ENCODE measurements at regions of chr2 and their contacts with region 1.

Region 1: DNA sequence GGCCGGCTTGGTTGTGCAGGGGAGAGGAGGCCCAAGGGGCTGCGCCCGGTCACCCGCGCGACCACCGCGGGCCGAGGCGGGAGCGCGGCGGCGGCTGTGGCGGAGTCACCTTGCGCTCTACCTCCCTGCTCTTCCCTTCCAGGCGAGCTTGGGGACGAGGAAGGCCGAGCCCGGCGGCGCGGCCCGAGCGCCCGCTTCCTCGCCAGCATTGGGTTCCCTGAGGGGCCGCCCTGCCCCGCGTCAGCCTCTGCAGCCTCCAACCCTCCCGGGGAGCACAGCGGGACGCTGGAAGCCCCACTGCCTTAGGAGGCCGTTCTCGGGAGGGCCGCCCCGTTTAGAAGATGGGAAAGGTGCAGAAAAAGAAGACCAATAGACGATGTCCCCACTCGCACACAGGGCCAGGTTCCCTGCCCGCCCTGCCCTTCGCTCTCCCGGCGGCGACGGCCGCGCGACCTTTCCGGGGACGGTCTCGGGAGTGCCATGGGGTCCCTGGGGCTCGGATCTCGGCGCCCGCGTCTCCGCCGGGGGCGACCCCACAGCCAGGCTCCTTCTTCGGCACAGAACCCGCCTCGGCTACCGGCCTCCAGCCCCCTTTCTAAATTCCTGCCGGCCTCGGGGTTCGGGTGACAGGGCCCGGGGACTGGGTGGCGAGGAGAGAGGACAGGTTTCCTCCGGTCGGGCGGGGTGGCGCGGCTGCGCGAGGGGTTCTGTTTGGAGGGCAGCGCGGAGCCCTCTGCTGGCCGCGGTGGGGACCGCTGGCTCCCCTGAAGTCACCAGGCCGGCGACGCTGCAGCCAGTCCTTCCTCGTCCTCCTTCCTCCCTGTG is 85.5 kb downstream of the HS6ST1 start:
- DNase-seq: peak; percentile 92
- H3K4me3 ChIP-seq: peak overlapping the region; percentile 45 to 82 (median 59)
- H3K27ac ChIP-seq: peak overlapping the region; percentile 76 to 84 (median 83)
- H3K4me1 ChIP-seq: peaks cover 0 to 25% (median 8%) of the 10 kb centered on the region in 4 donors
- H3K27me3 ChIP-seq: no peaks in the 10 kb centered on the region
- CTCF ChIP-seq: peak; percentile 87 to 92 (median 91)
- EP300 ChIP-seq: no peak
- POLR2A ChIP-seq: peak; percentile 54

Region 2: DNA sequence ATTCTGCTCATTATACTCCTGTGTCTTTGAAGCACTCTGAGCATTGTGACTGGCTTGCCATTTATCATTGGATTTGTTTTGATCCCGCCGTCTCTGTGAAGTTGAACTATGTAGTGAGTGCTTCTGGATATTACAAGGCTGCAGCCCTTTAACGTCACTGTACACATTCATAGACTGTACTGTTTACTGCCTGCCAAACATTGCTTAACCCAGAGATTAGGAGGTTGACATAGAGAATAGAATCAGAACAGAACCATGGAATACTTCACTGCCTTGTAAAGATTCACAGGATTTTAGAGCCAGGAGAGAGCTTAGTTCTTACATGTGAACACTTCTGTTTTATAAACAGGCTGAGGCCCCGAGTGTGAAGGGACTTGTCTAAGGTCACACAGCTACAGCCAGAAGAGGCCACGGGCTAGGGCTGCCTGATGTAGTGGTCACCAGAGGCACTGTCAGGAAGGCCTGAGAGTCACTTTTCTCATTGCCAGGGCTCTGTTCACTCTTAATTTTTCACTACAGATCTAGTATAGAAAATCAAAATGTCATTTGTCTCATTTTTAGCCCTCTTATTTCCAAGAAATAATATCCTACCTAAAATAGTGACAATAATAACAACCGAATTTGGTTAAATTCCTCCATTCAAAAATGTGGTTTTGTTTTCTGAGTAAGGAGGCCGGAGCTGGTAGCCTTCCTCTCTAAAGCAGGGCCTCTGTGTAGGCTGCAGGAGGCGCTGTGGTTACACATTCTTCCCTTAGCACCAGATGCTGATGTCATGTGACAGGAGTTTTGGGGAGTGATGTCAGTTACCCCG is 54.3 kb before region 1 on chr2:
- in situ Hi-C with region 1: loop called in 1 of 4 experiments (anchors 10 kb)
- intact Hi-C with region 1: loop called (anchors 5 kb)
- DNase-seq: peak; percentile 75
- H3K4me3 ChIP-seq: no peak overlapping the region
- H3K27ac ChIP-seq: peak overlapping the region; percentile 59 to 66 (median 62)
- H3K4me1 ChIP-seq: no peaks in the 10 kb centered on the region
- H3K27me3 ChIP-seq: no peaks in the 10 kb centered on the region
- CTCF ChIP-seq: peak; percentile 65 to 85 (median 75)
- EP300 ChIP-seq: peak; percentile 90
- POLR2A ChIP-seq: no peak

Region 3: GRCh38 chr2:128215897-128216642 is 17.1 kb before region 1 on chr2:
- in situ Hi-C with region 1: no loop called
- intact Hi-C with region 1: no loop called
- DNase-seq: no peak
- H3K4me3 ChIP-seq: no peak overlapping the region
- H3K27ac ChIP-seq: no peak overlapping the region
- H3K4me1 ChIP-seq: peaks cover 0 to 4% (median 0%) of the 10 kb centered on the region in 4 donors
- H3K27me3 ChIP-seq: no peaks in the 10 kb centered on the region
- CTCF ChIP-seq: no peak
- EP300 ChIP-seq: no peak
- POLR2A ChIP-seq: no peak